PC-9 (cell line): ENCODE measurements at regions of chr6 and their contacts with region 1.

Region 1: GRCh38 chr6:146857980-146858347 is 259.2 kb downstream of the ADGB start:
- DNase-seq: no peak
- H3K4me3 ChIP-seq: peak overlapping the region; percentile 26; the same call in 1 of the 2 replicates
- H3K27ac ChIP-seq: no peak overlapping the region
- H3K4me1 ChIP-seq: no peaks in the 10 kb centered on the region
- H3K27me3 ChIP-seq: no peaks in the 10 kb centered on the region
- CTCF ChIP-seq: no peak

Region 2: GRCh38 chr6:146161664-146162063 is 696.3 kb before region 1 on chr6:
- CTCF ChIA-PET with region 1: no interaction called
- POLR2A ChIA-PET with region 1: interaction called, 16 read pairs
- intact Hi-C with region 1: no loop called
- DNase-seq: no peak
- H3K4me3 ChIP-seq: no peak overlapping the region
- H3K27ac ChIP-seq: no peak overlapping the region
- H3K4me1 ChIP-seq: no peaks in the 10 kb centered on the region
- H3K27me3 ChIP-seq: no peaks in the 10 kb centered on the region
- CTCF ChIP-seq: no peak

Region 3: DNA sequence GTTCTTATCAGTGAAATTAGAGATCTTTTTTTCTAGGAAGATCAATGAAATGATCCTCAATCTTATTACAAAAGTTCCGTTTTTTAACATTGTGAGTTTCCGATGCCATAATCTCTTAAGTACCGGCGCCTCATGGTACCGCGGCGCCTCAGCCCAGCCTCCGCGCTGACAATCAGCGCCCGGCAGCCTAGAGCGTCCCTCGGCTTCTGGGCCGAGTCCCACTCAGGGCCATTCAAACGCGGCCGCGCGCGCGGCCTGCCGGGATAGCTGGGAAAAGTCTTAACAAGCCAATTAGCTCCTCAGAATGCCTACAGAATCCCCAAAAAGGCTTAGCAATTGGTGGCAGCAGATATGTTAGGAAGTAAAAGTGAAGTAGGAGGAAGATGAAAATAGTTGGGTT is 54.4 kb before region 1 on chr6:
- CTCF ChIA-PET with region 1: no interaction called
- POLR2A ChIA-PET with region 1: no interaction called
- intact Hi-C with region 1: no loop called
- DNase-seq: no peak
- H3K4me3 ChIP-seq: no peak overlapping the region
- H3K27ac ChIP-seq: no peak overlapping the region
- H3K4me1 ChIP-seq: peaks cover 21% of the 10 kb centered on the region
- H3K27me3 ChIP-seq: no peaks in the 10 kb centered on the region
- CTCF ChIP-seq: no peak

Region 4: DNA sequence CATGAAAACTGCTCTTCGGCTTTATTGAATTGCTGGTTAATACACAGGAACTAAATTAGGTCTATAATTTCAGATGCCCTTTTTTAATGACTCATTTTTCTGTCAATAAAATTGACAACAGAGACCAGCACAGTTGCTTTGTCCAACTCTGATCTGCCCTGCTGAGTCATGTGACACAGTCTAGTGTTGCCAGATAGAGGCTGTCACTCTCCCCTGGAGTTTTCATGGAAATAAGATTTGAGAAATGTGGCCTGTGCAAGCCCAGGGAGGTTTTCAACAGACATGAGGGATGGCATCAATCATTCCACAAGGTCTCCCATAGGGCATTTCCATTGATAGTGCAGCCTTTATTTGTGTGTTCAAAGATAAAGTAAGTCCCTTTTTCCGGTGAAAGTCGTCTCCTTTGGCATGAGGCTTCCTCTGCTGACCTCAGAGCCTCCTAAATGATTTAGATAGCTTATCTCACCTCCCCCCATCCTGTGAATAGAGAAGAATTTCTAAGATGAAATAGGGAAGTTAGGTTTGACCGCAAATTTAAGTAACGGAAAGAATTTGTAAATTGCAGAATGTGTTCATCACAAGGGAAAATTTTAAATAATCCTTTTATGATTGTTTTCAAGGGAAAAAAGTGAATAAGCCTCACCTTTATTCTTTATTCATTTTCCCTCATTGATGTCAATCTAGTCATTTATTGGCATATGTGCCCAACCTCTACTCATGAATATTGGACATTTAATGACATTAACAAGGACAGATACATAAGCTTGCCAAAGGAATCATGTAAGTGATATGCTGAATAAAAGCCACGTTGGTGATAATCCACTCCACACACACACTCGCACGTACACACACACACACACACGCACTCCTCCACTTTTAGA is 18.5 kb after region 1 on chr6:
- CTCF ChIA-PET with region 1: no interaction called
- POLR2A ChIA-PET with region 1: no interaction called
- intact Hi-C with region 1: no loop called
- DNase-seq: no peak
- H3K4me3 ChIP-seq: no peak overlapping the region
- H3K27ac ChIP-seq: no peak overlapping the region
- H3K4me1 ChIP-seq: peaks cover 21% of the 10 kb centered on the region
- H3K27me3 ChIP-seq: no peaks in the 10 kb centered on the region
- CTCF ChIP-seq: no peak

Region 5: GRCh38 chr6:146928503-146928902 is 70.5 kb after region 1 on chr6:
- CTCF ChIA-PET with region 1: no interaction called
- POLR2A ChIA-PET with region 1: no interaction called
- intact Hi-C with region 1: loop called (anchors 2 kb)
- DNase-seq: no peak
- H3K4me3 ChIP-seq: no peak overlapping the region
- H3K27ac ChIP-seq: no peak overlapping the region
- H3K4me1 ChIP-seq: no peaks in the 10 kb centered on the region
- H3K27me3 ChIP-seq: no peaks in the 10 kb centered on the region
- CTCF ChIP-seq: no peak